HepG2 (cell line): ENCODE measurements at regions of chr3 and their contacts with region 1.

Region 1: DNA sequence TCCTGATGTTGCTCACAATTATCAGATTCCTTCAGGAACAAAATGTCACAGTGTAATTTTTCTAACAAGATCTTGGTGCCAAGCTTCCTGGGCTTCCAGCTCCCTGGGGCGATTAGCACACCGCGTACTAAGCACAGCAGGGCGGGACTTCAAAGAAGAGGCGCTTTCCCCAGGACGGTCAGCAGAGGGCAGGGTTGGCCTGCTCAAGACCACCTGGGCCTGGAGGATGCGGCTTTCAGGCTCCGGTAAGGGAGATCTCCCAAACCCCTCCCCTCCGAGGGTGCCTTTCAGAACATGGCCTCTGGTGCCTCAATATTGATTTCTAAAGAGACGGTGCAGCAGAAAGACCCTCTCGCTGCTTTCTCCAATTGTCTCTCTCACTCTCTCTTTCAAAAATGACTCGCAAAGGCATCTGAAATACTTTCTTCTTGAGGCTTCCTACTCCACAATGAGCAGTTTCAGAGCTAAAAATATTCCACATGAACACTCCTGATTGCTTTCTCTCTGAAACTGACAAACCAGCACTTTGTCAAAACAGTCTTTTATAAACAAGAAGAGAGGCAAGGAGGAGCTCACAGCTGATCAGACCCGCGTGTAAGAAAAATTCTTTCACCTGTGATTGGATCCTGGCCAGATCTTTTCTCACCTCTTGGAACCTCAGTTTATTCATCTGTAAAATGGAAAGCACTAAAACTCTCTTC is 154.0 kb downstream of the ADAMTS9 start:
- DNase-seq: peak; percentile 64
- ATAC-seq: peak; percentile 100
- H3K4me3 ChIP-seq: no peak overlapping the region
- H3K27ac ChIP-seq: no peak overlapping the region
- H3K4me1 ChIP-seq: 0 out of 2 replicates have a peak, but pooled peaks cover 6% of the 10 kb centered on the region
- H3K27me3 ChIP-seq: no peaks in the 10 kb centered on the region; a peak in 1 of 5 replicates
- CTCF ChIP-seq: peak; percentile 97
- EP300 ChIP-seq: no peak
- POLR2A ChIP-seq: no peak
- RAD21 ChIP-seq: peak; percentile 89

Region 2: DNA sequence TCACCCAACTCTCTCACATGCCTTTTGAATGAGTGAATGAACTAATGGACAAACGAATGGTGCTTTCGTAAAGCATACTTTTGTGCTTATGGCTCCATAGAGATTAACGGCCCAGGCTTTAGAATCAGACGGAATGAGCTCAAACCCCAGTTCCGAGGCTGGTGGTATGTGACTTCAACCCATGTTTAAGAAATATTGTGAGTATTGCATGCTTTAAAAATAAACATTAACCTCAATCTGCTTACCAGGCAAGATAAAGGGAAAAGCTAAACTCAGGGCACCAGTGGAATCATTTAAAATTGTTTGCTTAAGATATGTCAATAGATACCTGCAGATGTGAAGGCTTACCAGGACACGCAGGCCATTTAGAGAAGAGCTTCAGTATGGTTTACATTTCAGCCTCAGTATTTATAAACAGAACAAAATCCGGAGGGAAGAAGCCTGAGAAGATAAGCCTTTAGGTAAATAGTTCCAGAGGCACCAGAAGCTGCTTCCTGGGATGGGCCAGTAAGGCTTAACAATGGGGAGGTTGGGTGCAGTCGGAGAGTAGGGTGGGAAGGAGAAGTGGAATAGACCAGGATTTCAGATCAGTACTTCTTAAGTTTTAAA is 32.4 kb before region 1 on chr3:
- CTCF ChIA-PET with region 1: no interaction called
- POLR2A ChIA-PET with region 1: no interaction called
- in situ Hi-C with region 1: no loop called
- intact Hi-C with region 1: loop called (anchors 1 kb)
- DNase-seq: peak; percentile 97
- ATAC-seq: peak; percentile 96
- H3K4me3 ChIP-seq: peak overlapping the region in 1 of 3 experiments; percentile 18; a peak in 1 of 6 replicates
- H3K27ac ChIP-seq: peak overlapping the region; percentile 48
- H3K4me1 ChIP-seq: peaks cover 59% of the 10 kb centered on the region
- H3K27me3 ChIP-seq: peaks cover 2 to 50% of the 10 kb centered on the region in 2 experiments; a peak in 4 of 5 replicates
- CTCF ChIP-seq: no peak
- EP300 ChIP-seq: peak in 1 of 2 experiments; percentile 88; a peak in 2 of 4 replicates
- POLR2A ChIP-seq: no peak
- RAD21 ChIP-seq: no peak

Region 3: DNA sequence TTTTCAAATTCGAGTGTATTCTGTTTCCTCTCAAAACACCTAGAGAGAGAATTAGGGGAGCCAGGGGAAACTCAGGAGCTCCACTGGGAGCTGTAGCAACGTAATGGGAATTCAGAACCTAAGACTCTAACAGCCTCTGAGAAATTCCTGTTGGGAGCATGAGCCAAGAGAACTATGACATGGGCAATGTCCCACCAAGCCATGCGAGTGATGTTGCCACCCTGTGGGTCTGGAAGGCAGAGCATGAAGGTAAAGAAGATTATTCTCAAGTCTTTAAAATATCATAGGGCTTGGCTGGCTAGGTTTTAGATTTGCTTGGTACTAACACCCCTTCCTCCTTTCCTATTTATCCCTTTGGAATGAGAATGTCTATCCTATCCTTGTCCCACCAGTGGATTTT is 546.7 kb after region 1 on chr3:
- CTCF ChIA-PET with region 1: no interaction called
- POLR2A ChIA-PET with region 1: no interaction called
- in situ Hi-C with region 1: no loop called
- intact Hi-C with region 1: loop called (anchors 5 kb)
- DNase-seq: no peak
- ATAC-seq: peak; percentile 39; the same call in 2 of the 3 replicates
- H3K4me3 ChIP-seq: no peak overlapping the region
- H3K27ac ChIP-seq: no peak overlapping the region
- H3K4me1 ChIP-seq: no peaks in the 10 kb centered on the region
- H3K27me3 ChIP-seq: no peaks in the 10 kb centered on the region
- CTCF ChIP-seq: 0 out of 2 replicates have a peak, but pooled peaks have one; percentile 10
- EP300 ChIP-seq: no peak
- POLR2A ChIP-seq: no peak
- RAD21 ChIP-seq: no peak

Region 4: DNA sequence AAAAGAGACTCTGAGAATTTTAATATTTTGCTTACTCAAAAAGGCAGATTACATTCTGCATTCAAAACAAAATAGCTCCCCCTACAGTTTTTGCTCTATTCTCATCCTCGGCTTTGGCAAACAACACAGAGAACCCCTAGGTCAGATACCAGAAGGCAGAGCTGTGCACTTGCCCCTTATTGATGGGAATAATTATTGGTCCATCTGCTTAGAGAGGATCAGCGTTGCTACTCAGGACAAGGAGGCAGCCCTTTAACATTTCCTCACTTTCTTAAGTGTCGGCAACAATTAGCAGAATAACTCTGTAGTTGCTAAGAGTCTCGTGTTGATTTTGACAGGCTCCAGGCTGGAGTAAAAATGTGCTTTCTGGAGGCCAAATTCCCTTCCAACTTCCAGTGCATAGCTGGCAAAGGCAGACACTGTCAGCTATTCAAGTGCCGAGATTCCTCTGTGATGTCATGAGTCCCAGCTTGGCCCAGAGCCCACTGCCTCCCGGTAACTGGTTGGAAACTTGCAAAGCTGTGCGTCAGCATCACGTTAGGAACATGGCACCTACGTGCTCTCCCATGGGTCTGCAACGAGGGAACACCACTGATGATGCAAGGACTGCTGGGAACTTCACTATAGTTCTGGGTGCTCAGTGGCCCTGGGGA is 636.7 kb after region 1 on chr3:
- CTCF ChIA-PET with region 1: no interaction called
- POLR2A ChIA-PET with region 1: no interaction called
- in situ Hi-C with region 1: no loop called
- intact Hi-C with region 1: loop called (anchors 1 kb)
- DNase-seq: no peak
- ATAC-seq: peak; percentile 54; the same call in 1 of the 3 replicates
- H3K4me3 ChIP-seq: no peak overlapping the region
- H3K27ac ChIP-seq: no peak overlapping the region
- H3K4me1 ChIP-seq: peaks cover 9% of the 10 kb centered on the region
- H3K27me3 ChIP-seq: no peaks in the 10 kb centered on the region; a peak in 1 of 5 replicates
- CTCF ChIP-seq: no peak
- EP300 ChIP-seq: no peak
- POLR2A ChIP-seq: no peak
- RAD21 ChIP-seq: no peak

Region 5: GRCh38 chr3:65412588-65412987 is 878.8 kb after region 1 on chr3:
- CTCF ChIA-PET with region 1: no interaction called
- POLR2A ChIA-PET with region 1: no interaction called
- in situ Hi-C with region 1: loop called (anchors 25 kb)
- intact Hi-C with region 1: no loop called
- DNase-seq: peak; percentile 45
- ATAC-seq: peak; percentile 92
- H3K4me3 ChIP-seq: no peak overlapping the region
- H3K27ac ChIP-seq: no peak overlapping the region
- H3K4me1 ChIP-seq: peaks cover 11% of the 10 kb centered on the region
- H3K27me3 ChIP-seq: no peaks in the 10 kb centered on the region
- CTCF ChIP-seq: peak; percentile 69
- EP300 ChIP-seq: no peak
- POLR2A ChIP-seq: no peak
- RAD21 ChIP-seq: no peak